MCF 10A (cell line): ENCODE measurements at regions of chr2 and their contacts with region 1.

Region 1: DNA sequence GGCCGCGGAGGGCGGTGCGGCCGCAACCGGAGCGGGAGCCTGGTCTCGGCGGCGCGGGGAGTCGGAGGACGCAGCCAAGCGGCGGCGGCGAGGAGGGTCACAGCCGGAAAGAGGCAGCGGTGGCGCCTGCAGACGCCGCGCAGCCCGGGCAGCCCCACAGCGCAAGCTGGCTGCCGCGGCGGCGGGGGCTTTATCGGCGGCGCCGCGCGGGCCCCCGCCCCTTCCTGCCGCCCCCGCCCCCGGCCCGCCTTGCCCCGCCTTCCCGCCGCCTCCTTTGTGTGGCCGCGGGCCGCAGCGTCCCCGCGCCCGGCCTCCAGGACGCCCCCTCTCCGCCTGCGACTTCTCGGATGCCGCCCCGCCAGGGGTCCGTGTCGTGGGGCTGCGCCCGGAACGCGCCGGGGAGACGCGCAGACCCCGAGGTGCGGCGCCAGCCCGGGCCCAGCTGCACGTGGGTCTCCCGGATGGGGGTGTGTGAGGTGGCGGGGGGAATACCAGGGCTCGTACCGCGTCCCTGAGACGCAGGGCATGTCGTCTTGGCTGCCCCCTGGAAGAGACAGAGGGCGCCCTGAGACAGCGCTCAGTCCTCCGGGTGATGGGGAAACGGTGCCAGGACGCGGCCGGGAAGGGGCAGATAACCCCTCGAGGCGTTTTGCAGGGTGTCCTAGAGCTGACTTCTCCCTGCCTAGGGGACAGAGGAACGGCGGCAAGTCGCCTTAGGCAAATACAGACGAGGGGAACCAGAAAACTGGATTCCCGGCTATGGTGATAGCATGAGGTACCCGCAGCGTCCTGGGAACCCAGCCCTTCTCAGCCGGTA is at the start of gene SERPINE2:
- DNase-seq: peak; percentile 64
- H3K4me3 Mint-ChIP-seq: peak within 1 kb of the TSS; percentile 84
- H3K27ac Mint-ChIP-seq: peak within 1 kb of the TSS; percentile 10
- H3K4me1 Mint-ChIP-seq: peaks cover 28% of the 10 kb centered on the region
- H3K27me3 Mint-ChIP-seq: no peaks in the 10 kb centered on the region
- CTCF ChIP-seq: peak; percentile 30
- total RNA-seq, gene SERPINE2: 176 and 231 TPM in 2 replicates

Region 2: DNA sequence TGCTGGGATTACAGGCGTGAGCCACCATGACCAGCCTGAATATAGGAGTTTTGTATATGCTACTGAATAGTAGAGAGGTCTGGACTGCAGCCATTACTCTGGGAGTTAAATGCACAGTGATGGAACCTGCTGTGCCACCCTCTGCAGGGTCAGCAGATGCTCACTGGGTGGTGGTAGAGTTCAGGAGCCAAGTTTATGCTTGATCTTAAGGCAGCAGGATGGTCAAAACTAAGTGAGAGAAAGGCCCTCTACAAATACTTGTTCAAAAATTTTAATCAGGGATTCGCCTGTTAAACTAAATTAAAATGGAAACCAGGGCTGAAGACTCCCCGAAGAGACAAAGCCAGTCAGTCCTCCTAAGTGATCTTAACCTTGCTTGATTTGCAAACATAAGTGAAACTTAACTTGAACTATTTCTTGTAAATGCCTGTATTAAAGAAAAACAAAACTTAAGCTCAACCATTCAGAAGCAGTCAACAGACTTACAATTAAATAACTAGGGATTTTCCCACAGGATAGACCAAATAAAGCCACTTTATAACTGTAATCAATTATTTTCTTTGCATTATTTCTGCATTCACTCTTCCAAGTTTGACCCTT is 90.0 kb before region 1 on chr2:
- CTCF ChIA-PET with region 1: no interaction called
- POLR2A ChIA-PET with region 1: no interaction called
- intact Hi-C with region 1: no loop called
- DNase-seq: no peak
- H3K4me3 Mint-ChIP-seq: no peak overlapping the region
- H3K27ac Mint-ChIP-seq: no peak overlapping the region
- H3K4me1 Mint-ChIP-seq: peaks cover 8% of the 10 kb centered on the region
- H3K27me3 Mint-ChIP-seq: no peaks in the 10 kb centered on the region
- CTCF ChIP-seq: no peak

Region 3: GRCh38 chr2:224086226-224086914 is 47.0 kb after region 1 on chr2:
- CTCF ChIA-PET with region 1: interaction called, 4 read pairs
- POLR2A ChIA-PET with region 1: no interaction called
- intact Hi-C with region 1: loop called (anchors 2 kb)
- DNase-seq: peak; percentile 94
- H3K4me3 Mint-ChIP-seq: peak overlapping the region; percentile 24
- H3K27ac Mint-ChIP-seq: no peak overlapping the region
- H3K4me1 Mint-ChIP-seq: peaks cover 21% of the 10 kb centered on the region
- H3K27me3 Mint-ChIP-seq: no peaks in the 10 kb centered on the region
- CTCF ChIP-seq: no peak

Region 4: GRCh38 chr2:224145751-224146355 is 106.5 kb after region 1 on chr2:
- CTCF ChIA-PET with region 1: interaction called, 4 read pairs
- POLR2A ChIA-PET with region 1: interaction called, 3 read pairs
- intact Hi-C with region 1: loop called (anchors 2 kb)
- DNase-seq: peak; percentile 91
- H3K4me3 Mint-ChIP-seq: peak overlapping the region; percentile 42
- H3K27ac Mint-ChIP-seq: peak overlapping the region; percentile 97
- H3K4me1 Mint-ChIP-seq: peaks cover 45% of the 10 kb centered on the region
- H3K27me3 Mint-ChIP-seq: no peaks in the 10 kb centered on the region
- CTCF ChIP-seq: no peak

Region 5: GRCh38 chr2:224278531-224278930 is 239.2 kb after region 1 on chr2:
- CTCF ChIA-PET with region 1: interaction called, 34 read pairs
- POLR2A ChIA-PET with region 1: interaction called, 4 read pairs
- intact Hi-C with region 1: loop called (anchors 1 kb)
- DNase-seq: no peak
- H3K4me3 Mint-ChIP-seq: no peak overlapping the region
- H3K27ac Mint-ChIP-seq: no peak overlapping the region
- H3K4me1 Mint-ChIP-seq: peaks cover 9% of the 10 kb centered on the region
- H3K27me3 Mint-ChIP-seq: no peaks in the 10 kb centered on the region
- CTCF ChIP-seq: no peak